Activated CD4-positive, alpha-beta T cell treated with anti-CD3 and anti-CD28 coated beads, Interleukin-2, amount 10 ng/mL, durations not matched to agents 24 days and 14 days (primary cell): ENCODE measurements at regions of chr4 and their contacts with region 1.

Region 1: GRCh38 chr4:15738877-15739276 is 36.0 kb downstream of the BST1 start:
- DNase-seq: no peak
- H3K4me3 Mint-ChIP-seq: peak overlapping the region; percentile 27
- H3K27ac Mint-ChIP-seq: peak overlapping the region; percentile 77
- H3K4me1 Mint-ChIP-seq: peaks cover 40% of the 10 kb centered on the region
- H3K27me3 Mint-ChIP-seq: no peaks in the 10 kb centered on the region

Region 2: GRCh38 chr4:15451866-15452765 is 286.8 kb before region 1 on chr4:
- intact Hi-C with region 1: no loop called
- DNase-seq: peak; percentile 13
- H3K4me3 Mint-ChIP-seq: no peak overlapping the region
- H3K27ac Mint-ChIP-seq: no peak overlapping the region
- H3K4me1 Mint-ChIP-seq: no peaks in the 10 kb centered on the region
- H3K27me3 Mint-ChIP-seq: peaks cover 2% of the 10 kb centered on the region

Region 3: DNA sequence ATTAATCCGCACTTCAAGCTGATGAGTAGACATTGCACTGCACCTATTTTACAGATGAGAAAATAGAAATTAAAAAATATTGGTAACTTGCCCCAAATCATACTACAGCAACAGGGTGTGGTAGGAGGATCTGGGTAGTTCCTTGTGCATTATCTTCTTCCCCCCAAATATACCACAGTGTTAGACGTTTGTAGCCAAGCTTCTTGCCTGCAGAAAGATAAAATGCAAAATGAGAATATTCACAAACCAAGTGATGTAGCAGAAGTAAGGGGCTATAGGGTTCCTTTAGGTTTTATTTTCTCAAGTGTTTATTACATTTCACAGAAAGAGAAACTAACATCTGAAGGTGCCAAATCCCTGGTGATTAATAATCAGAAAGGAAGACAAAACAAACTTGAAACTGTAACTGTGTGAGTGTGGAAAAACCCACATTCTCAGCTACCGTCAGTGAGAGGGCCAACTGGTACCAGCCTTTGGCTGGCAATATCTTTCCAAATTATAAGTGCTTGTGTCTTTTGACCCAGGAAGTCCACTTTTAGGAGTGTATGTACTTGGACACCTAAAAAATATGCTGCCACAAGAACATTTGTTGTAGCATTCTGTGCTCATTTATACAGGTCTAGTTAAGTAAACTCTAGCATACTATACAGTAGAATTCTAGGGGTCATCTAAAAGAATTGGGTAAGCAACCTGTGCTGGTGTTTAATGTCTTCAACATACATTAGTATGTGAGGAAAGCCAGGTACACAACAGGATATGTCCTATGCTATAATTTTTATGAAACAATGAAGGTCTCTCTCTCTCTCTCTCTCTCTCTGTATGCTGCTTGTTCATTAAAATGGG is 32.6 kb after region 1 on chr4:
- intact Hi-C with region 1: loop called (anchors 1 kb)
- DNase-seq: peak; percentile 83
- H3K4me3 Mint-ChIP-seq: peak overlapping the region; percentile 54
- H3K27ac Mint-ChIP-seq: peak overlapping the region; percentile 80
- H3K4me1 Mint-ChIP-seq: peaks cover 62% of the 10 kb centered on the region
- H3K27me3 Mint-ChIP-seq: no peaks in the 10 kb centered on the region

Region 4: GRCh38 chr4:15794905-15795304 is 56.0 kb after region 1 on chr4:
- intact Hi-C with region 1: loop called (anchors 1 kb)
- DNase-seq: no peak
- H3K4me3 Mint-ChIP-seq: peak overlapping the region; percentile 49
- H3K27ac Mint-ChIP-seq: peak overlapping the region; percentile 79
- H3K4me1 Mint-ChIP-seq: peaks cover 50% of the 10 kb centered on the region
- H3K27me3 Mint-ChIP-seq: peaks cover 1% of the 10 kb centered on the region

Region 5: DNA sequence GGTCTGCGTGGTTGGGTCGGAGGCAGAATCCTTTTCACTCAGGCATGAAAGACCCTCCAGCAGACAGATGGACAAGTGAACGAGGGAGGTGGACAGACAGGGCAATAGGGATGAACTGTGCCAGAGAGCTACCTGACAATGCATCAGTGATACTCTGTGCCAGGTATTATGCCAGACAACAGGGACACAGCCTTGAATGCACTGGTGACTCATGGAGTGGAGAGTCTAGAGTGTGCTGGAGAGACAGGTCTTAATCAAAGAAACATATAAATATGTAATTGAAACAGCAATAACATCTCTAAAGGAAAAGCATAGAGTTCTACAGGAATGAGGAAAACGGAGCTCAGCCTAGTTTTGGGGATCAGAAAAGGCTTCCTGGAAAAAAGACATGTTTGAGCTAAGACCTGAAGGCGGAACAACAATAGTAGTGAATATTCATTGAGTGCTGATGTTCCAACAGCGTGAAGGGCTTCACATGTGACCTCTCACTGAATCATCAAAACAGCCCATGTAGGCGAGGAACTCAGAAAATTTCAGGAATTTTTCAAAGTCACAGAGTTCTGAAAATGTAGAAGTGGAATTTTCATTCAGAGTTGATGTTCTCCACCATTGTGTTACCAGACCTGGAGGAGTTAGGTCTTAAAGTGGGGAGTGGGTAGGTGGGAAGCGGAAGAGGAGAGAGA is 244.1 kb after region 1 on chr4:
- intact Hi-C with region 1: no loop called
- DNase-seq: no peak
- H3K4me3 Mint-ChIP-seq: no peak overlapping the region
- H3K27ac Mint-ChIP-seq: no peak overlapping the region
- H3K4me1 Mint-ChIP-seq: no peaks in the 10 kb centered on the region
- H3K27me3 Mint-ChIP-seq: peaks cover 8% of the 10 kb centered on the region